ENCODE measurements at regions of chr11 and their contacts with region 1.

Region 1: DNA sequence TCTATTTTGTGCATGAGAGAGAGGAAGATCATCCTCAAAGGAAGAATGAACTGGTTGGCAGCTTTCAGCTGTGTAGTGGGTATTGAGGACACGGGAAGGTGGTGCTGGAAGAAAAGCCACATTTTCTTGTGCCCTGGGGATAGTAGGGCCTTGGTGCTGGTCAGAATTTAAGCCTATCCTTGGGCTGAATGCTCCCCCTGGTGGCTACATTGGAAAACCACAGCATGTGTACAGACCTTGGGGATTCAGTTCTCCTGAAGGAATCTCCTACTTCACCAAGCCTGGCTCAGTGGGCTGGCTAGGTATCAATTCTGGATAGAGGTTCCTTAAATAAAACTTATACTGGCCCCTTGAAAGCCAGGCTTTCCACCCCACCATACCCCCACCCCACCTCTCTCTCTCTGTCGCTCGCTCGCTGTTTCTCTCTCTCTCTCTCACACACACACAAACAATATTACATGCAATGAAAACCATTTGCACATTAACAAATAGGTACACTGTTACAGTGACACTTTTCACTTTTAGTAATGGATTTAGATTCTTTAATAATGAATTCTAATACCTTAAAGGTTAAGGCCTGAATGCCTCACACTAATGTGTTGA is 2.8 kb upstream of the OR51M1 start:
- DNase-seq: no peak
- H3K4me3 ChIP-seq: no peak overlapping the region
- H3K27me3 ChIP-seq: no peaks in the 10 kb centered on the region
- CTCF ChIP-seq: peak; percentile 86

Region 2: GRCh38 chr11:5123802-5124521 is 256.9 kb before region 1 on chr11:
- CTCF ChIA-PET with region 1: interaction called, 12 read pairs
- POLR2A ChIA-PET with region 1: no interaction called
- DNase-seq: peak; percentile 9
- H3K4me3 ChIP-seq: no peak overlapping the region
- H3K27me3 ChIP-seq: no peaks in the 10 kb centered on the region
- CTCF ChIP-seq: peak; percentile 87

Region 3: DNA sequence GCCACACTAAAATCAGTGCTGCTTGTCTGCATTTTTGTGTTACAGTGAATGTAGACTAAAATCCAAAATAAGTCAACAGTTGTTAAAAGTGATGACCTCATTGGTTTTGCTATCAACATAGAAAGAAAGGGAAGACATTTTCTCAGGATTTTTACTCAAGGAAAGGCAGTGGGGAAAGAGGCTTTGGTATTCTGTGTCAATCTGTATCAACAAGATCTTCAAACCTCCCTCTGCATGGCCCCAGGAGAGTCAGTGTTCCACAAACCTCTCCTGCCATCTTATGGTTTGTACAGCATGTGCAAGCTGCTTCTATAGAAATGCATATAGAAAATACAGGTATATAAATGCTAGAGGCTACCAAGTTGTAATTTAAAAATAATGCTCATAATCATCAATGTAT is 11.0 kb before region 1 on chr11:
- CTCF ChIA-PET with region 1: interaction called, 23 read pairs
- POLR2A ChIA-PET with region 1: no interaction called
- DNase-seq: no peak
- H3K4me3 ChIP-seq: no peak overlapping the region
- H3K27me3 ChIP-seq: no peaks in the 10 kb centered on the region
- CTCF ChIP-seq: peak; percentile 61

Region 4: DNA sequence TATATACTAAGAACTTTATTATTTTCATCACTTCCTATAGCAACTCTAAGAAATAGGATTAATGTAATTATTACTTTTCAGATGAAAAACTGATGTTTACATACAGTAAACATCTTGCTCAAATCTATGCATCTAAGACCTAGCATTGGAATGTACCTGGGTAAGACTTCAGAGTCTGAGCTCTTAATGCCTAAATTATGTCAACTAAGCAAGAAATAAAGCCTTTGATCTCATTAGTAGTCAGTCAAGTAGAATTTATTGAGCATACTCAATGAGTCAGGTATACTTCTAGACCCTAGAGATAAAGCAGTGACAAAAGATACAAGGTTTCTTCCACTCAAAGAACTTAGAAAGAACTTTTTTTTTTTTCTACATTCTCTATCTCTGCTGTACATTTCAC is 24.3 kb after region 1 on chr11:
- CTCF ChIA-PET with region 1: no interaction called
- POLR2A ChIA-PET with region 1: no interaction called
- DNase-seq: no peak
- H3K4me3 ChIP-seq: no peak overlapping the region
- H3K27me3 ChIP-seq: no peaks in the 10 kb centered on the region
- CTCF ChIP-seq: no peak

Region 5: GRCh38 chr11:5643585-5643984 is 262.7 kb after region 1 on chr11:
- CTCF ChIA-PET with region 1: no interaction called
- POLR2A ChIA-PET with region 1: no interaction called
- DNase-seq: no peak
- H3K4me3 ChIP-seq: no peak overlapping the region
- H3K27me3 ChIP-seq: no peaks in the 10 kb centered on the region
- CTCF ChIP-seq: no peak

Region 6: DNA sequence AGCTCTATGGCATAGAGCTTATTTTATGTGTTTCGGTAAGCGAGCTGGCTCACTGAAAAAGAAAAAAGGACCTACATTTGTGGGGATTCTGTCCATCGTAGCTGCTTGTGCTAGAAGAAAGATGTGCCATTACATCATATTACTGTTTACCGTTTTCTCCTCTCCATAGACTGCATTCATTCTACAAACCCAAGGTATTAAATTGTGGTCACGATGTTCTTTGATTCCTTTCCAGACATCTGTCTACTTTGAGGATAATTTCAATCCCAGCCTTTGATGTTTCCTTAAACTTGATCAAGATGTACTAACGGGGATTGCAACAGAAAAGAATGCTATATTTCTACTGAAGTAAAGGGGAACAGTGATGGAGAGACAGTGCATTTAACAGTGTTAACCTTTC is 415.7 kb after region 1 on chr11:
- CTCF ChIA-PET with region 1: no interaction called
- POLR2A ChIA-PET with region 1: no interaction called
- DNase-seq: no peak
- H3K4me3 ChIP-seq: no peak overlapping the region
- H3K27me3 ChIP-seq: no peaks in the 10 kb centered on the region
- CTCF ChIP-seq: no peak

Measured in BJ (cell line).